ENCODE measurements at regions of chr9 and their contacts with region 1.

Region 1: DNA sequence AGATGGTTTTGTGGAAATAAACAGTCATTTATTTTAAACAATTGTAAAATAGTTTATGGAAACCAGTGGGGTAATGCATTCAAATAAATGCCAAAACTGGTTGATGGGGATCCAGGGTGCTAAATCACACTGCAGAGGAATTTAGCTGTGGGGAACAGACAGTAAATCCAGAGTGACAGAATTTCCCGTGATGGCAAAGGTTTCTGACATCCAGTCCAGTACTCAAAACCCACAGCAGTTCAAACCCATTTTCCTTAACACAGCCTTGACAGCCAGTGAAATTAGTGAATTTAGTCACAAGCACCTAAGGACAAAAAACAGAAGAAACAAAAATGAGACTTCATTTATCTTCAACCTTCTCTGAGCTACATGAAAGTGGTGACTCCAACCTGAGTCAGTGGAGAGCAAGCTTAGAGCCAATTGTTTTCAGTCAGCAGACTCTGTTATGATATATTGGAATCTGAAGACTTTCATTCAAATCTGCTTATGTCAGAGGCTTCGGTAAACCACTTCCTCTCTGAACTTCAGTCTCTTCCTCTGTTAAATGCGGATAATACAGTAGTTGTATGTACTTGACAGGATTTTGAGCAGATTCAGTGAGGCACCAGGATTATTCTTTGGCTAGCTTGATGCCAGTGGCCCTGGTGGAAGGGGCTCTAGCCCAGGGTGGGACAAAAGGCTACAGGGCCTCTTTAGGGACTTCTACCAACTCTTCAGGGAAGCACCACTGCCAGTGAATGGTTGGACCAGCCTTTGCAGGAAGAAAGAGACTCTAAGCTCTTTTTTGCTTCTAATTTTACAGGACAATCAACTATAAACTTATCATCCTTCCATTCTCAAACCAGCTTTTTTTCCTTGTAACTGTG is 185.3 kb downstream of the MAPKAP1 start:
- DNase-seq: peak; percentile 24
- H3K4me3 Mint-ChIP-seq: peak overlapping the region; percentile 51
- H3K27ac Mint-ChIP-seq: peak overlapping the region; percentile 91
- H3K4me1 Mint-ChIP-seq: peaks cover 50% of the 10 kb centered on the region
- H3K27me3 Mint-ChIP-seq: no peaks in the 10 kb centered on the region

Region 2: GRCh38 chr9:125558453-125559092 is 36.9 kb after region 1 on chr9:
- intact Hi-C with region 1: loop called (anchors 1 kb)
- DNase-seq: peak; percentile 36
- H3K4me3 Mint-ChIP-seq: no peak overlapping the region
- H3K27ac Mint-ChIP-seq: no peak overlapping the region
- H3K4me1 Mint-ChIP-seq: peaks cover 27% of the 10 kb centered on the region
- H3K27me3 Mint-ChIP-seq: no peaks in the 10 kb centered on the region

Region 3: DNA sequence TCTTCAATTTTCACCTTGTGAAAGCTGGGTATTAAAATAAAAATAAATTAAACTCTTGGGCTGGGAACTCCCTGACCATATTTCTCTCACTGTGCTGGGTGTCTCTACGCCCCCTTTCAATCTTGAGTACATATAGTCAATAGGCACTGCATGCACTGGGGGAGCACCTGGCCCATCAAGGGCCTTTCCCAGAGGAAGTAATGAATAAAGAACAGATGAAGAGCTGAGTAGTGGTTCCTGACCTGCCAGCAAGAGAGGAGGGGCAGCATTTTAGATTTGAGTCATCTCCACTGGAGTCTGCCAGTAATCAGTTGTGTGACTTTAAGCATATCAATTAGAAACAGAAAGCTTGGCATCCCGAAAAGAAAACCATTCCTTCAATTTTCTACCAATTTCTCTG is 179.1 kb after region 1 on chr9:
- intact Hi-C with region 1: loop called (anchors 1 kb)
- DNase-seq: no peak
- H3K4me3 Mint-ChIP-seq: no peak overlapping the region
- H3K27ac Mint-ChIP-seq: peak overlapping the region; percentile 61
- H3K4me1 Mint-ChIP-seq: peaks cover 39% of the 10 kb centered on the region
- H3K27me3 Mint-ChIP-seq: no peaks in the 10 kb centered on the region